Ovary (tissue), 10 donors: ENCODE measurements at regions of chr9 and their contacts with region 1.

Region 1: DNA sequence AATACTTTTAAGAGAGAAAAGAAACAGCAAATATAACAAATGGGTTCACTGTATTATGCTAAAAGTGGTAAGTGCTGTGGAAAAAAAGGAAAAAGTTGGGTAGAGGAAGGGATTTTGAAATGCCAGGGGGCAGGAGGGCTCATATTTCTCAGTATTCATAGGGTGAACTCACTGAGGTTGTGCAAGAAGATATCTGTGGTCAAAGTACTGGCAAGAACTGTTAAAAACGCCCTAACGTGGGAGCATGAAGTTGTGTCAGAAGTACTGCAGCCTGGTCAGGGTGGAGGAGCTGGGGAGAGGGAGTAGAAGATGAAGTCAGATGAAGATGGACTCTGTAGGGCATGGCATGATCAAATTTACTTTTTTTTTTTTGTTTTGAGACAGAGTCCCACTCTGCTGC is 31.2 kb upstream of the SLC28A3 start:
- DNase-seq: peak in 1 of 5 donors; percentile 21
- H3K4me3 ChIP-seq: no peak overlapping the region
- H3K27ac ChIP-seq: no peak overlapping the region
- H3K4me1 ChIP-seq: no peaks in the 10 kb centered on the region
- H3K27me3 ChIP-seq: no peaks in the 10 kb centered on the region
- CTCF ChIP-seq: no peak
- EP300 ChIP-seq: no peak
- POLR2A ChIP-seq: no peak

Region 2: DNA sequence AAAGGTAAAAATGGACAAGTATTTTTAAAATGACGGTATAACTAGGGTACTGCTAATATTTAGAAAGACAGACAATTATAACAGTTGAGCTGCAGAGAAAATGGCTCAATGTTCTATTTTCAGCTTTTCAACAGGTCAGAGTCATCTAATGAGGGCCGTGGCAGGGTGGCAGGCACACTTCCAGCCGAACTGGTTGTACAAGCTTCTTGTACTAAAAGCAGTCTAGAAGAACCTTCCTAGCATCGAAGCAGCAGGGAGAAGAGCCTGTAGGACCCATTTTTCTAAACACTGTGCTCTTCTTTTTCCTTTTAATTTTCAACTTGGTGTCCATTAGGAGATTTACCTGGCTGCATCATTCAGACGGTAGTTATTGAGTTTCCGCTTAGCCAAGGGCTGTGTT is 116.8 kb before region 1 on chr9:
- intact Hi-C with region 1: no loop called
- DNase-seq: no peak
- H3K4me3 ChIP-seq: no peak overlapping the region
- H3K27ac ChIP-seq: no peak overlapping the region
- H3K4me1 ChIP-seq: no peaks in the 10 kb centered on the region
- H3K27me3 ChIP-seq: no peaks in the 10 kb centered on the region
- CTCF ChIP-seq: no peak
- EP300 ChIP-seq: no peak
- POLR2A ChIP-seq: no peak

Region 3: DNA sequence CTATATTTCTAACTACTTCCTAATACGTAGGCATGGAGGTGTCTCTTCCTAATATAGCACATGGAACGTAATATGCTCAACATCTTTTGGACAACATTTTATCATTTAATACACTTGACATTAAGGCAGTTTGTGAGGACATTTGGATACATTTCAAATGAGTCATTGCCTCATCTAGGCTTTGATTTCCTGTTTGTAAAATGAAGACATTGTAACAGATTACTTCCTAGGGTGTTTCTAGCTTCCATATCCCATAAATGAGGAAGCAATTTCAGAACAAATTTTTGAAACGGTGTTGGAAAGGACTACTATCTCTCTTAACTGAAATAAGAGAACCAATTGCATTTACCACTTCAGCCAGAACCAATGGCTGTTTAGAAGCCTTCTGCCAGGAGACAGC is 69.9 kb before region 1 on chr9:
- intact Hi-C with region 1: loop called in 1 of 4 experiments (anchors 10 kb)
- DNase-seq: no peak
- H3K4me3 ChIP-seq: no peak overlapping the region
- H3K27ac ChIP-seq: no peak overlapping the region
- H3K4me1 ChIP-seq: no peaks in the 10 kb centered on the region
- H3K27me3 ChIP-seq: no peaks in the 10 kb centered on the region
- CTCF ChIP-seq: no peak
- EP300 ChIP-seq: no peak
- POLR2A ChIP-seq: no peak

Region 4: GRCh38 chr9:84554069-84554664 is 182.4 kb after region 1 on chr9:
- intact Hi-C with region 1: loop called in 1 of 4 experiments (anchors 5 kb)
- DNase-seq: no peak
- H3K4me3 ChIP-seq: no peak overlapping the region
- H3K27ac ChIP-seq: no peak overlapping the region
- H3K4me1 ChIP-seq: peaks cover 1% of the 10 kb centered on the region
- H3K27me3 ChIP-seq: no peaks in the 10 kb centered on the region
- CTCF ChIP-seq: no peak
- EP300 ChIP-seq: no peak
- POLR2A ChIP-seq: no peak